ENCODE measurements at regions of chr6 and their contacts with region 1.

Region 1: GRCh38 chr6:63819831-63820230 is 184.2 kb downstream of the PHF3 start:
- DNase-seq: no peak

Region 2: DNA sequence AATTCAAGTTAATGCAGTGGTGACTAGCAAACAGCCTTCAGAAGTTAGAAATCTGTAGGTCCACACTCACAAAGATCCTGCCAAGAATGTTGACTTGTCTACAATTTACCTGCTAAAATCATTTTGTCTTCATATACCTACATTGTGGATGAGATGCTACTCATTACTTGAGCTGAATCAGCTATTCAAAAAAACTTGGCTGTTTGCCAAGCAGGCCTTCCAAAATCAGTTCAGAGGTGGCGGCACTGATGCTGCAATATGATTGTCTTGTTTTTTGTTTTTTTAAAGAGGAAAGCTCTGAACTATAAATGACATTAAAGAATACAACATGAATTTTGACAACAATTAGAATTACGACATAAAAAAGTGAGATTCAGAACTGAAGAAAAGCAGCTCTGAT is 1179.1 kb before region 1 on chr6:
- intact Hi-C with region 1: loop called in 1 of 2 experiments (anchors 10 kb)
- DNase-seq: no peak

Measured in posterior vena cava (tissue), 2 donors.